ENCODE measurements at regions of chr2 and their contacts with region 1.

Region 1: DNA sequence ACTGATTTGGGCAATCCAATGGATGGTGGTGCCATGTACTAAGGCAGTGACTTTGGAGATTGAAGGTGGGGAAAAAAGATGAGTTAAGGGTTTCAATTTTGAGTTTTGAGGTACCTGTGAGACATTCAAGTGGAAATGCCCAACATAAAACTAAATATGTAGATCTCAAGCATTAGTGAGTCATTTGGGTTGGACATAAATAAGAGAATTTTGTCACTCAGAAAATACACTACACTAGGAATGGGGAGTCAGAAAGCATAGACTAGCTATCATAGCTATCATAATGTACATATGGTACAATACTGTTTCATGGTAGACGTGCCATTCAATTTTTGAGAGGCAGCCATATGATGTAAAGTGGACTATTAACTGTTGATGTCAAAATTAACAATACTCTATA is 56.1 kb downstream of the FBXO11 start:
- DNase-seq: no peak
- ATAC-seq: no peak
- H3K4me3 ChIP-seq: no peak overlapping the region
- H3K27ac ChIP-seq: no peak overlapping the region
- H3K4me1 ChIP-seq: peaks cover 0 to 11% (median 0%) of the 10 kb centered on the region in 3 donors
- H3K27me3 ChIP-seq: no peaks in the 10 kb centered on the region
- CTCF ChIP-seq: no peak

Region 2: GRCh38 chr2:47697000-47697601 is 153.1 kb before region 1 on chr2:
- intact Hi-C with region 1: no loop called
- DNase-seq: no peak
- ATAC-seq: no peak
- H3K4me3 ChIP-seq: no peak overlapping the region
- H3K27ac ChIP-seq: no peak overlapping the region
- H3K4me1 ChIP-seq: no peaks in the 10 kb centered on the region
- H3K27me3 ChIP-seq: no peaks in the 10 kb centered on the region
- CTCF ChIP-seq: no peak

Region 3: GRCh38 chr2:48107326-48107925 is 257.2 kb after region 1 on chr2:
- intact Hi-C with region 1: loop called in 1 of 3 experiments (anchors 10 kb)
- DNase-seq: no peak
- ATAC-seq: no peak
- H3K4me3 ChIP-seq: no peak overlapping the region
- H3K27ac ChIP-seq: no peak overlapping the region
- H3K4me1 ChIP-seq: peaks cover 0 to 6% (median 3%) of the 10 kb centered on the region in 3 donors
- H3K27me3 ChIP-seq: no peaks in the 10 kb centered on the region
- CTCF ChIP-seq: no peak